Gastrocnemius medialis (tissue), 4 donors: ENCODE measurements at regions of chr16 and their contacts with region 1.

Region 1: GRCh38 chr16:57576429-57576870 is 34.0 kb downstream of the ADGRG5 start:
- DNase-seq: peak in 1 of 2 donors; percentile 29
- ATAC-seq: peak; percentile 47 to 62
- H3K4me3 ChIP-seq: no peak overlapping the region
- H3K27ac ChIP-seq: no peak overlapping the region
- H3K4me1 ChIP-seq: no peaks in the 10 kb centered on the region
- H3K27me3 ChIP-seq: peaks cover 0 to 9% (median 0%) of the 10 kb centered on the region in 3 donors
- CTCF ChIP-seq: peak; percentile 38 to 88 (median 75)
- POLR2A ChIP-seq: no peak

Region 2: DNA sequence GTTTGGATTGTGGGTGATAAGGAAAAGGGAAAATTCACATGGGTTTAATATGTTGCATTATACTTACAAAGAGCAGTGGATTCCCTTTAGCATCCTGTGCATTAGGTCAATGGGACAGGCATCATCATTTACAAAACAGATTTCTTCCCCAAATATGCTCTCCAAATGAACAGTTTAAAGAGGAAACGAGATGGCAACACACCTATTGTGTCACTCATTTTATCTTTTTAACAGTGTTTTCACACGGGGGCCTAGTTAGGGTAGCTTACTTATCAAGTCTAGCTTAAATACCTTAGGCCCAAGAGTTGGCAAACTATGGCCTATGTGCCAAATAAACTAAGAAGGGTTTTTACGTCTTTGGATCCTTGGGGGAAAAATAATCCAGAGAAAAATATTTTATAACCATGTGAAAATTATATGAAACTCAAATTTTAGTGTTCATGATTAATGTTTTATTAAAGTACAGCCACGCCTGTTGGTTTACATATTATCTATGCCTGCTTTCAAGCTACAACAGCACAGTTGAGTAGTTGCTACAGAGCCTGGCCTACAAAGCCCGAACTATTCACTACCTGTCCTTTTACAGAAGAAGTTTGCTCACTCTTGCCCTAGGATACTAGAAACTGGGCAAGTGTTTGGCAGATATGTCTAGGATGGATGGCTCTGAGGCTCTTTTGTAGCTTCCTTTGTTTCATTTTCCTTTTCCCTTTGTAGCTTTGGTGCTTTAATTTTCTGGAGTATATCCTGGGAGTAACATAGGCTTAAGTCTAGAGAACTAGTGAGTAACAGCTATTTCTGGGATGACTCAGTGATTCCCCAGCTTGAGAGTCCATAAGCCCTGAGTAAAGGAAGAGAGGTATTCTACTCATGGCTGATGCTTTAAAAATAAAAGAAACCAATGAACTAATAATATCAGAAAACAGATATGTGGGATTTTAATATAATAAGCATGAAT is 834.1 kb before region 1 on chr16:
- in situ Hi-C with region 1: no loop called
- intact Hi-C with region 1: no loop called
- DNase-seq: no peak
- ATAC-seq: no peak
- H3K4me3 ChIP-seq: no peak overlapping the region
- H3K27ac ChIP-seq: no peak overlapping the region
- H3K4me1 ChIP-seq: peaks cover 12 to 16% of the 10 kb centered on the region in 2 donors
- H3K27me3 ChIP-seq: no peaks in the 10 kb centered on the region
- CTCF ChIP-seq: no peak
- POLR2A ChIP-seq: no peak

Region 3: DNA sequence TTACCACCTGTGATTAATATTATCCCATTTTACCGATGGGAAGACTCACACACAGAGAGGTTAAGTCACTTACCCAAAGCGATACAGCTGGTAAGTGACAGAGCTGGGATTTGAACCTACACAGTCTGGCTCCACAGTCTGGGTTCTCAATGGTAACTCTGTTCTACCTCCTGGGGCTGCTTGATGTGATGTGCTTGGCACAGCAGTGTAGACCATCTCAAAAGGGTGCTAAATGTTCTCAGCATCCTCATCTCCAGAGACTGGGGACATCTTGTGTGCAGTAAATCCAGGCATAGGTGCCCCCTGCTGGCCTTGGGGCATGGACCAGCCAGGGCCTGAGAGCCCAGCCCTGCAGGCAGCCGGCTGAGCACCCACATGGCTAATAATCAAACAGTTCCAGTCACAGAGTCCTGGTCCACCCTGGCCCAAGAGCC is 143.7 kb after region 1 on chr16:
- in situ Hi-C with region 1: no loop called
- intact Hi-C with region 1: loop called (anchors 5 kb)
- DNase-seq: no peak
- ATAC-seq: no peak
- H3K4me3 ChIP-seq: no peak overlapping the region
- H3K27ac ChIP-seq: no peak overlapping the region
- H3K4me1 ChIP-seq: no peaks in the 10 kb centered on the region
- H3K27me3 ChIP-seq: no peaks in the 10 kb centered on the region
- CTCF ChIP-seq: peak in 2 of 5 experiments; percentile 34 to 39
- POLR2A ChIP-seq: no peak